ENCODE measurements at regions of chr6 and their contacts with region 1.

Region 1: GRCh38 chr6:159852877-159853276 is 37.9 kb upstream of the MAS1 start:
- DNase-seq: peak in 10 of 35 experiments; percentile 12 to 52 (median 26)
- ATAC-seq: peak in 1 of 4 experiments; percentile 60
- H3K4me3 ChIP-seq: no peak overlapping the region
- H3K4me3 Mint-ChIP-seq: no peak overlapping the region
- H3K27ac ChIP-seq: no peak overlapping the region
- H3K27ac Mint-ChIP-seq: no peak overlapping the region
- H3K4me1 ChIP-seq: peaks cover 0 to 2% of the 10 kb centered on the region in 2 experiments
- H3K4me1 Mint-ChIP-seq: no peaks in the 10 kb centered on the region
- H3K27me3 ChIP-seq: no peaks in the 10 kb centered on the region
- H3K27me3 Mint-ChIP-seq: peaks cover 0 to 5% of the 10 kb centered on the region in 2 donors

Region 2: GRCh38 chr6:158009114-158009891 is 1843.6 kb before region 1 on chr6:
- CTCF ChIA-PET with region 1: interaction called in 1 of 2 experiments, 12 read pairs
- POLR2A ChIA-PET with region 1: no interaction called
- DNase-seq: peak in 19 of 35 experiments; percentile 11 to 41 (median 23)
- ATAC-seq: peak; percentile 73 to 84 (median 79)
- H3K4me3 ChIP-seq: peak overlapping the region; percentile 30 to 49
- H3K4me3 Mint-ChIP-seq: peak overlapping the region; percentile 70 to 85 (median 74)
- H3K27ac ChIP-seq: peak overlapping the region; percentile 57
- H3K27ac Mint-ChIP-seq: peak overlapping the region; percentile 91 to 95
- H3K4me1 ChIP-seq: peaks cover 45 to 60% of the 10 kb centered on the region in 2 experiments
- H3K4me1 Mint-ChIP-seq: peaks cover 78 to 95% (median 84%) of the 10 kb centered on the region in 3 donors
- H3K27me3 ChIP-seq: no peaks in the 10 kb centered on the region
- H3K27me3 Mint-ChIP-seq: no peaks in the 10 kb centered on the region

Region 3: DNA sequence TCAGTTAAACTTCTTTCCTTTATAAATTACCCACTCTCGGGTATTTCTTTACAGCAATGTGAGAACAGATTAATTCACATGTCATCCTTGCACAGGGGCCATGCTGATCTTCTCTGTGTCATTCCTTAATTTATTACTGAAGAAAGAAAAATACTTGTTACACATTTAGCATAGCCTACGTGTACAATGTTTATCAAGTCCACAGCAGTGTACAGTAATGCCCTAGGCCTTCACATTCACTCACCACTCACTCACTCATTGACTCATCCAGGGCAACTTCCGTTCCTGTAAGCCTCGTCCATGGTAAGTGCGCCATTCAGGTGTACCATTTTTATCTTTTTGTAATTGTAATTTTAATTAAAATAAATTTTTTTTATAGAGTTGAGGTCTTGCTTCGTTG is 926.5 kb before region 1 on chr6:
- CTCF ChIA-PET with region 1: no interaction called
- POLR2A ChIA-PET with region 1: interaction called in 1 of 2 experiments, 10 read pairs
- DNase-seq: no peak
- ATAC-seq: no peak
- H3K4me3 ChIP-seq: no peak overlapping the region
- H3K4me3 Mint-ChIP-seq: no peak overlapping the region
- H3K27ac ChIP-seq: no peak overlapping the region
- H3K27ac Mint-ChIP-seq: no peak overlapping the region
- H3K4me1 ChIP-seq: no peaks in the 10 kb centered on the region
- H3K4me1 Mint-ChIP-seq: no peaks in the 10 kb centered on the region
- H3K27me3 ChIP-seq: no peaks in the 10 kb centered on the region
- H3K27me3 Mint-ChIP-seq: no peaks in the 10 kb centered on the region

Region 4: DNA sequence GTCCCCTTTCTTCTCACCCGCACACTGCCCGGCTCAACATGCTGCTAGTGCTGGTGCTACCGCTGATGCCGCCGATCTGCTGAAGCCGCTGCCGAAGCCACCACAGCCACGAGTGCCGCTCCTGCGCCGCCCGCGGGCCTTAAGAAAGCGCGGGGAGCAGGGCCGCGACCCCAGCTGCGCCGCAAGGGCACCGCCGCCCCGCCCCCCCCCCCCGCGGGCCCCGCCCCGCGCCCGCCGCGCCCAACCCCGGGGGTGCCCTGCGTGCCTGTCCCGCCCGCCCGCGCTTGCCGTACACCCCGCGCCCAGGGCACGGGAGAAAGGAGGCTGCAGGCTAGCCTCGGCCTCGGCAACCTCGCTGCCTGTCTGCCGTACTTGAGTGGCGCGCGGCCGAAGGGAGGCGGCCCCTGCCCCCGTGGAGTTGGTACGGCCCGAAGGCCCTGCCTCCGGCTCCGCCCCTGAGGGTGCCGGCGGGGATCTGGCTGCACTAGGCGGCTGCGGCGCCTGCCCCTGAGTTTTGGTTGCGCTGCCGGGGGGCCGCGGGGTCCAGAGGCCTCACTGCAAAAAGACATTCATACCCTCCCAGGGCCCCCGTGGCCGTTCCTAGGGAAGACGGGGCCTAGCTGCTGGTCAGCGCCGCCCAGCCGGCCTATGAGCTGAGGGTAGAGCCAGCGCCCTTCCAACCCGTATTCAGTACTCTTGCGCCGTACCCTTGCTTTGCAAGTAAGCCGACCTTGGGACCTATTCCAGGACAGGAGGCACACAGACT is 159.6 kb before region 1 on chr6 and contains the start of gene SOD2:
- CTCF ChIA-PET with region 1: interaction called, 3 to 12 read pairs
- POLR2A ChIA-PET with region 1: no interaction called
- DNase-seq: peak; percentile 54 to 88 (median 75)
- ATAC-seq: peak; percentile 77 to 84 (median 80)
- H3K4me3 ChIP-seq: peak within 1 kb of the TSS; percentile 79 to 88
- H3K4me3 Mint-ChIP-seq: peak within 1 kb of the TSS; percentile 82 to 97 (median 92)
- H3K27ac ChIP-seq: peak within 1 kb of the TSS; percentile 80
- H3K27ac Mint-ChIP-seq: peak within 1 kb of the TSS; percentile 94 to 98
- H3K4me1 ChIP-seq: peaks cover 28 to 36% of the 10 kb centered on the region in 2 experiments
- H3K4me1 Mint-ChIP-seq: peaks cover 38 to 56% (median 52%) of the 10 kb centered on the region in 3 donors
- H3K27me3 ChIP-seq: no peaks in the 10 kb centered on the region
- H3K27me3 Mint-ChIP-seq: no peaks in the 10 kb centered on the region
- total RNA-seq, gene SOD2: 81.2 to 143 (median 112) TPM

Region 5: DNA sequence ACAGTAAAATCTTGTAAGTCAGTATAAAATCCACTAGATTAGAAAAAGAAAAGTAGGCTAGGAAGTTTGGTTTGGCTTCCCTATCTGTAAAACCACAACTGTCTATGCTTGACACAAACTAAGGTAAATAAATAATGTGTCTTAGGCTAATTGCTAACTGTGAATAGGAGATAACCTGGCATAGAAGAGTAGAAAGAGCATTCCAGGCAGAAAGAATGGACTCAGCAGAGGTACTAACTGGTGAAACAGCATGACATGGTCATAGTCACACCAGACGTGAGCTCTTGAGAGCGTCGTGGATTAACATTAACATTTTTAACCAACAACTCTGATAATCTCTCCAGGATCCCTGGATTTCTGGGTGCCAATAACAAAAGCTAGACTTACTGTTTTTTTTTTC is 134.2 kb before region 1 on chr6:
- CTCF ChIA-PET with region 1: interaction called, 3 to 13 read pairs
- POLR2A ChIA-PET with region 1: no interaction called
- DNase-seq: no peak
- ATAC-seq: no peak
- H3K4me3 ChIP-seq: no peak overlapping the region
- H3K4me3 Mint-ChIP-seq: no peak overlapping the region
- H3K27ac ChIP-seq: no peak overlapping the region
- H3K27ac Mint-ChIP-seq: no peak overlapping the region
- H3K4me1 ChIP-seq: peaks cover 0 to 2% of the 10 kb centered on the region in 2 experiments
- H3K4me1 Mint-ChIP-seq: peaks cover 10 to 12% (median 11%) of the 10 kb centered on the region in 3 donors
- H3K27me3 ChIP-seq: no peaks in the 10 kb centered on the region
- H3K27me3 Mint-ChIP-seq: no peaks in the 10 kb centered on the region

Region 6: GRCh38 chr6:159899994-159900745 is 47.3 kb after region 1 on chr6:
- CTCF ChIA-PET with region 1: no interaction called
- POLR2A ChIA-PET with region 1: no interaction called
- DNase-seq: no peak
- ATAC-seq: no peak
- H3K4me3 ChIP-seq: no peak overlapping the region
- H3K4me3 Mint-ChIP-seq: no peak overlapping the region
- H3K27ac ChIP-seq: no peak overlapping the region
- H3K27ac Mint-ChIP-seq: no peak overlapping the region
- H3K4me1 ChIP-seq: no peaks in the 10 kb centered on the region
- H3K4me1 Mint-ChIP-seq: no peaks in the 10 kb centered on the region
- H3K27me3 ChIP-seq: peaks cover 0 to 3% of the 10 kb centered on the region in 2 experiments
- H3K27me3 Mint-ChIP-seq: no peaks in the 10 kb centered on the region

Region 7: DNA sequence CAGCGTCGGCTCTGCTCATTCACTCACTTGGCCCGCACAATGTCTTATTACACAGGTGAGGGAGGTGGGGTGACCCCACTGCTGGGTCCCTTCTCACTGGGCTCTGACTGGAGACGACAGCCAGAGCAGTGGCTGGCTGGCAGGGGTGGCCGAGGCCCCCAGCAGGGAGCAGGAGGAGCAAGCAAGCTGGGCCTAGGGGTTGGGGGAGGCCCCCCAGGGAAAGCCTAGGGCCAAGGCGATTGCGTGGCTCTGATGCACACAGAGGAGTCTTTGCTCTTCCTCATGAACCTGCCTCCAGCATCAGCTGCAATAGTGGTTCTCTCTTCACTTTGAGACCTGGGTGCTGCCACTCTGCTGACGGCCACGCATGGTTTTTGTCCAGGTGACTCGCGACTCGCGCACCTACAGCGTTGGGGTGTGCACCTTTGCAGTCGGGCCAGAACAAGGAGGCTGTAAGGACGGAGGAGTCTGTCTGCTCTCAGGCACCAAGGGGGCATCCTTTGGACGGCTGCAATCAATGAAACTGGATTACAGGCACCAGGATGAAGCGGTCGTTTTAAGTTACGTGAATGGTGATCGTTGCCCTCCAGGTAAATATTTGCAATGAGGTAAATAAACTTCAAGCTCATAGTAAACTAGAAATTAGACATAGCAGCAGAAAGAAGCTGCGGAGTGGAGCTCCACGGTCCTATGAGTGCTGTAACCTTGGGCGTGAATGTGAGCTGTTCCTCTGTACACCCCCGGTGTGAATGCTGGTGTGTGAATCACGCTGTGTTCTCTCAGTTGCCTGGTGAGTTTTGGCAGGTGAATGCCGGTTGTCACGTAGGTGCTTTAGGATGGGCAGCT is 226.5 kb after region 1 on chr6:
- CTCF ChIA-PET with region 1: no interaction called
- POLR2A ChIA-PET with region 1: interaction called in 1 of 2 experiments, 10 read pairs
- DNase-seq: no peak
- ATAC-seq: no peak
- H3K4me3 ChIP-seq: no peak overlapping the region
- H3K4me3 Mint-ChIP-seq: no peak overlapping the region
- H3K27ac ChIP-seq: no peak overlapping the region
- H3K27ac Mint-ChIP-seq: no peak overlapping the region
- H3K4me1 ChIP-seq: no peaks in the 10 kb centered on the region
- H3K4me1 Mint-ChIP-seq: no peaks in the 10 kb centered on the region
- H3K27me3 ChIP-seq: no peaks in the 10 kb centered on the region
- H3K27me3 Mint-ChIP-seq: no peaks in the 10 kb centered on the region